ENCODE measurements at regions of chr1 and their contacts with region 1.

Region 1: GRCh38 chr1:224223819-224224714 is 41.0 kb downstream of the DEGS1 start:
- DNase-seq: peak; percentile 82
- H3K4me3 ChIP-seq: no peak overlapping the region
- H3K27ac ChIP-seq: no peak overlapping the region
- H3K4me1 ChIP-seq: peaks cover 16% of the 10 kb centered on the region
- H3K27me3 ChIP-seq: no peaks in the 10 kb centered on the region
- CTCF ChIP-seq: no peak
- POLR2A ChIP-seq: no peak

Region 2: GRCh38 chr1:224182057-224182865 is 41.8 kb before region 1 on chr1:
- CTCF ChIA-PET with region 1: no interaction called
- POLR2A ChIA-PET with region 1: no interaction called
- dilution Hi-C with region 1: no loop called
- intact Hi-C with region 1: no loop called
- DNase-seq: no peak
- H3K4me3 ChIP-seq: peak overlapping the region; percentile 57 to 68 (median 65)
- H3K27ac ChIP-seq: peak overlapping the region; percentile 65
- H3K4me1 ChIP-seq: peaks cover 5% of the 10 kb centered on the region
- H3K27me3 ChIP-seq: no peaks in the 10 kb centered on the region
- CTCF ChIP-seq: no peak
- POLR2A ChIP-seq: no peak

Region 3: GRCh38 chr1:224211206-224211962 is 12.7 kb before region 1 on chr1:
- CTCF ChIA-PET with region 1: no interaction called
- POLR2A ChIA-PET with region 1: no interaction called
- dilution Hi-C with region 1: no loop called
- intact Hi-C with region 1: loop called (anchors 2 kb)
- DNase-seq: peak; percentile 62
- H3K4me3 ChIP-seq: no peak overlapping the region
- H3K27ac ChIP-seq: no peak overlapping the region
- H3K4me1 ChIP-seq: peaks cover 3% of the 10 kb centered on the region
- H3K27me3 ChIP-seq: no peaks in the 10 kb centered on the region
- CTCF ChIP-seq: no peak
- POLR2A ChIP-seq: no peak

Region 4: GRCh38 chr1:224245188-224245587 is 21.1 kb after region 1 on chr1:
- CTCF ChIA-PET with region 1: interaction called, 4 read pairs
- POLR2A ChIA-PET with region 1: interaction called, 6 read pairs
- dilution Hi-C with region 1: no loop called
- intact Hi-C with region 1: loop called (anchors 2 kb)
- DNase-seq: peak; percentile 99
- H3K4me3 ChIP-seq: no peak overlapping the region
- H3K27ac ChIP-seq: peak overlapping the region; percentile 57
- H3K4me1 ChIP-seq: peaks cover 15% of the 10 kb centered on the region
- H3K27me3 ChIP-seq: no peaks in the 10 kb centered on the region
- CTCF ChIP-seq: no peak
- POLR2A ChIP-seq: peak; percentile 81

Region 5: GRCh38 chr1:224287714-224288113 is 63.6 kb after region 1 on chr1:
- CTCF ChIA-PET with region 1: no interaction called
- POLR2A ChIA-PET with region 1: no interaction called
- dilution Hi-C with region 1: no loop called
- intact Hi-C with region 1: no loop called
- DNase-seq: no peak
- H3K4me3 ChIP-seq: no peak overlapping the region
- H3K27ac ChIP-seq: no peak overlapping the region
- H3K4me1 ChIP-seq: no peaks in the 10 kb centered on the region
- H3K27me3 ChIP-seq: no peaks in the 10 kb centered on the region
- CTCF ChIP-seq: no peak
- POLR2A ChIP-seq: no peak

Measured in endothelial cell of umbilical vein (primary cell).